ENCODE measurements at regions of chr6 and their contacts with region 1.

Region 1: DNA sequence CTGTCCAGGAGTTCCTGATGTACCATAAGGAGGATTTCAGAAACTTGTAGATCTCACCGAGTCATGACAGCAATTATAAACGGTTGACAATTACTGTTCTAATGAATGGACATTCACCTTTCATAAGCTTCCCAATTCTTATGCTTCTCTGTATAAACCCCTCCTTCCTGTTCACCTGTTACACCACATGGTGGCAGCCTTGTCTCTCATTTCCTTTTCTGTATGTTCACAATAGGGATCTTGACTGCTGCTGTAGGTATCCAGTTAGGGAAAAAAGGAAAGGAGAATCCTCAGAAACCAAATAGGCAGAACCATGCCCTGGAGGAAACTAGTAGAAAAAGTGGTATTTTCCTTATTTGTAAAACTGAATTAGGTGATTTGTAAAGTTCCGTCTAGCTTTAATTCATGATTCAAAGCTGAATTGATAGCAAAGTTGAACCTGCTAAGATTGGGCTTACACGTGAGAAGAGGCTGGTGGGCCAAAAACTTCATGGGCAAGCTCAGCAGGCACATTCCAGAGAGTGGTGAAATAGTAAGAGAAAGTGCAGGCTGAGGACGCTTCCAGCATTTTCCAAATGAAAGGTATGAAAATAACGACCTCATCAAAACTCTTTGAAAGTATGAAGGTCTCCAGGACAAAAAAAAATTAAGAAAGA is 29.0 kb upstream of the TBPL1 start:
- DNase-seq: peak in 7 of 9 donors; percentile 26 to 64 (median 57)
- ATAC-seq: peak; percentile 89
- H3K4me3 ChIP-seq: no peak overlapping the region
- H3K4me3 Mint-ChIP-seq: no peak overlapping the region
- H3K27ac ChIP-seq: no peak overlapping the region
- H3K27ac Mint-ChIP-seq: no peak overlapping the region
- H3K4me1 ChIP-seq: no peaks in the 10 kb centered on the region
- H3K4me1 Mint-ChIP-seq: no peaks in the 10 kb centered on the region
- H3K27me3 ChIP-seq: no peaks in the 10 kb centered on the region
- H3K27me3 Mint-ChIP-seq: peaks cover 26 to 41% (median 38%) of the 10 kb centered on the region in 5 donors

Region 2: GRCh38 chr6:133768656-133769295 is 155.3 kb before region 1 on chr6:
- CTCF ChIA-PET with region 1: no interaction called
- POLR2A ChIA-PET with region 1: no interaction called
- intact Hi-C with region 1: no loop called
- DNase-seq: no peak
- ATAC-seq: no peak
- H3K4me3 ChIP-seq: no peak overlapping the region
- H3K4me3 Mint-ChIP-seq: no peak overlapping the region
- H3K27ac ChIP-seq: no peak overlapping the region
- H3K27ac Mint-ChIP-seq: no peak overlapping the region
- H3K4me1 ChIP-seq: no peaks in the 10 kb centered on the region
- H3K4me1 Mint-ChIP-seq: no peaks in the 10 kb centered on the region
- H3K27me3 ChIP-seq: no peaks in the 10 kb centered on the region
- H3K27me3 Mint-ChIP-seq: peaks cover 5 to 44% (median 27%) of the 10 kb centered on the region in 5 donors

Region 3: DNA sequence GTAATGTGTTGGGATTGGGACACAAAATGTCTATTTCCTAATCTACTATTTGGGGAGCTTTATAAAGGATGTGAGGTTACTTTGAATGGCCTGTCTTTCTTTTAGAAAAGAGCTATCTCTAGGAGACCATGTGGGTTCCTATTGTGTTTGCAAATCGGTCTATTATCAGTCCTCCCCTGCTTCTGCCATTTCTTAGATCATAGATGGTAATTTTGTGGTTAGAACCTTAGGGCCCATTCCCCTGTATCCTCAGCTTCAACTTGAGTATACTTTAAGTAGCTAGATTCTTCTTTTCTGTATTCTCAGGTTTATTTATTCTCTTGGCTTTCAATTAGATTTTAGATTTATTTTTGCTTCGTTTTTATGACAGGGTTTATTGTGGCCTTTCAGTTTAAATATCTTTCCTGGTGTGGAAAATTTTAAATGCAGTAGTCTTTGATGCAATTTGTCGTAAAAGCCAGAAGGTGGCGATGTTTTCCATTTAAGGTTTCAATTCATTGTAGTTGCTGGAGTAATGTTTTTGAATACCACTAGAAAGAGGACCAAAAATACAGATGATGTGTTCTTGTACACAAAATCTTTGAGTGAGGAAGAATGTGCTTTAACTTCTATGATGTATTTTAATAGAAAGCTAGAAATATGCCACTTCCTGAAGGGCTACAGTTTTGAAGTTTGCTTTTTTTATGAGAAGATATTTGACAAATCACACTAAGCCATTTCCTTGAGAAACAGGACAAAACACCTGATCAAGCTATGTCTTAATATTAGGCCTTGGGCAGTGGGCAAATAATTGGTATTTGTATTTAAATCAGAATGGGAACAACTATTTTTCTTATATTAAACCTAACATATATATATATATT is 49.3 kb after region 1 on chr6:
- CTCF ChIA-PET with region 1: interaction called, 22 read pairs
- POLR2A ChIA-PET with region 1: no interaction called
- intact Hi-C with region 1: loop called (anchors 1 kb)
- DNase-seq: peak in 7 of 9 donors; percentile 16 to 53 (median 43)
- ATAC-seq: peak; percentile 79
- H3K4me3 ChIP-seq: no peak overlapping the region
- H3K4me3 Mint-ChIP-seq: no peak overlapping the region
- H3K27ac ChIP-seq: no peak overlapping the region
- H3K27ac Mint-ChIP-seq: peak overlapping the region in 2 of 9 donors; percentile 45 to 79
- H3K4me1 ChIP-seq: peaks cover 0 to 6% of the 10 kb centered on the region in 2 donors
- H3K4me1 Mint-ChIP-seq: peaks cover 16 to 67% (median 59%) of the 10 kb centered on the region in 7 donors
- H3K27me3 ChIP-seq: no peaks in the 10 kb centered on the region
- H3K27me3 Mint-ChIP-seq: no peaks in the 10 kb centered on the region

Region 4: DNA sequence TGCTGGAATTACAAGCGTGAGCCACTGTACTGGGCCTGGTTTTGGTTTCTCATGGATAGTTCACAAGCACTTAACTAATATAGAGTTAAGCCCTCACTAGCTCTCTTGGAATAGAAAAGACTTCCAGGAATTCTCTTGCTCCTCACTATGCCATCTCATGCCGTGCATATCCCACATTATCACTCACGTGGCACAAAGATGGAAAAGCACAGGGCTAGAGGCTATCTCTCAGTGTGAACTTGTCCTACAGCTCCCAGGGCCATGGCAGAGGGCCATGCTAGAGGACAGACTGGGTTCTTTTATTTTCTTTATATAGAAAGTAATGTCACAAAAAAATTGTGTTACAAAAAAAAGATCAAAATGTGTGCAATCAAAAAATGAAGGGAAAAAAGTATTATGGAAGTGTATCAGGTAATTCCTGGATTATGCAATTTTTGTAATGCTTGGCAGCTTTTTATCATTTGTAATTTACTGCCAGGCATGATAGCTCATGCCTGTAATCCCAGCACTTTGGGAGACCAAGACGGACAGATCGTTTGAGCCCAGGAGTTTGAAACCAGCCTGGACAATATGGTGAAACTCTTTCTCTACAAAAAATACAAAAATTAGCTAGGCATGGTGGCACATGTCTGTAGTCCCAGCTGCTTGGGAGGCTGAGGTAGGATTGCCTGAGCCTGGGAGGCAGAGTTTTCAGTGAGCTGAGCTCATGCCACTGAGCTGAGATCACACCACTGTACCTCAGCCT is 134.7 kb after region 1 on chr6:
- CTCF ChIA-PET with region 1: interaction called, 68 read pairs
- POLR2A ChIA-PET with region 1: no interaction called
- intact Hi-C with region 1: loop called (anchors 1 kb)
- DNase-seq: no peak
- ATAC-seq: no peak
- H3K4me3 ChIP-seq: no peak overlapping the region
- H3K4me3 Mint-ChIP-seq: no peak overlapping the region
- H3K27ac ChIP-seq: no peak overlapping the region
- H3K27ac Mint-ChIP-seq: no peak overlapping the region
- H3K4me1 ChIP-seq: no peaks in the 10 kb centered on the region
- H3K4me1 Mint-ChIP-seq: peaks cover 0 to 2% (median 0%) of the 10 kb centered on the region in 7 donors
- H3K27me3 ChIP-seq: peaks cover 0 to 2% of the 10 kb centered on the region in 2 donors
- H3K27me3 Mint-ChIP-seq: peaks cover 0 to 17% (median 11%) of the 10 kb centered on the region in 5 donors

Region 5: GRCh38 chr6:134097114-134097707 is 173.1 kb after region 1 on chr6:
- CTCF ChIA-PET with region 1: interaction called, 93 read pairs
- POLR2A ChIA-PET with region 1: interaction called, 3 read pairs
- intact Hi-C with region 1: loop called (anchors 1 kb)
- DNase-seq: peak in 8 of 9 donors; percentile 26 to 70 (median 54)
- ATAC-seq: peak; percentile 68
- H3K4me3 ChIP-seq: no peak overlapping the region
- H3K4me3 Mint-ChIP-seq: no peak overlapping the region
- H3K27ac ChIP-seq: no peak overlapping the region
- H3K27ac Mint-ChIP-seq: no peak overlapping the region
- H3K4me1 ChIP-seq: no peaks in the 10 kb centered on the region
- H3K4me1 Mint-ChIP-seq: peaks cover 0 to 6% (median 0%) of the 10 kb centered on the region in 7 donors
- H3K27me3 ChIP-seq: peaks cover 0 to 3% of the 10 kb centered on the region in 2 donors
- H3K27me3 Mint-ChIP-seq: peaks cover 13 to 31% (median 20%) of the 10 kb centered on the region in 5 donors

Region 6: DNA sequence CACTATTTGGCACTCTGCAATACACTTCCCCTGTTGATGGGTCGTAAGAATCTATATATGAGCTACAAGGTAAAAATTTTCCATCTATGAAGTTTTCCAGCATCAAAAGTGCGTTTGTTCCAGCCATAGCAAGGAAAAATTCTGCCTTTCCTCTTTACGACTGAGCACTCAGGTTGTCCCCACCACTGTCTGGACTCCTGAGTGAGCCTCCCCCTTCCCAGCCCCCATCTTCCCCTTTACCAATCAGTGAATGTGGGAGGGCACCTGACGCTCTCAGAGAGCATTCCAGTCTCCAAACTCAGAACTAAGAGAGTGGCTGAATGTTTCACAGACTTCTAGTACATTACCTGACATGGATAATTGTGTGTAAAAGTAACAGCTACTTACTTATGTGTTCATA is 1025.9 kb after region 1 on chr6 and contains the start of gene ALDH8A1:
- CTCF ChIA-PET with region 1: no interaction called
- POLR2A ChIA-PET with region 1: no interaction called
- intact Hi-C with region 1: loop called in 1 of 2 experiments (anchors 10 kb)
- DNase-seq: no peak
- ATAC-seq: no peak
- H3K4me3 ChIP-seq: no peak within 1 kb of the TSS
- H3K4me3 Mint-ChIP-seq: no peak within 1 kb of the TSS
- H3K27ac ChIP-seq: no peak within 1 kb of the TSS
- H3K27ac Mint-ChIP-seq: no peak within 1 kb of the TSS
- H3K4me1 ChIP-seq: no peaks in the 10 kb centered on the region
- H3K4me1 Mint-ChIP-seq: no peaks in the 10 kb centered on the region
- H3K27me3 ChIP-seq: no peaks in the 10 kb centered on the region
- H3K27me3 Mint-ChIP-seq: no peaks in the 10 kb centered on the region
- total RNA-seq, gene ALDH8A1: 1.7 to 4.3 (median 2.8) TPM

Measured in naive thymus-derived CD4-positive, alpha-beta T cell (primary cell).